ENCODE measurements at regions of chr1 and their contacts with region 1.

Region 1: GRCh38 chr1:21782868-21783678 is at the start of gene USP48:
- DNase-seq: peak; percentile 92
- ATAC-seq: peak; percentile 85
- H3K4me3 ChIP-seq: peak within 1 kb of the TSS; percentile 72 to 97 (median 80)
- H3K27ac ChIP-seq: peak within 1 kb of the TSS; percentile 99
- H3K4me1 ChIP-seq: peaks cover 41% of the 10 kb centered on the region
- H3K27me3 ChIP-seq: no peaks in the 10 kb centered on the region; a peak in 1 of 5 replicates
- CTCF ChIP-seq: peak; percentile 22; the same call in 1 of the 2 replicates
- EP300 ChIP-seq: no peak
- POLR2A ChIP-seq: peak; percentile 98 to 99
- RAD21 ChIP-seq: peak; percentile 7; the same call in 1 of the 2 replicates
- total RNA-seq, gene USP48: 29.9 and 30.4 TPM in 2 replicates

Region 2: DNA sequence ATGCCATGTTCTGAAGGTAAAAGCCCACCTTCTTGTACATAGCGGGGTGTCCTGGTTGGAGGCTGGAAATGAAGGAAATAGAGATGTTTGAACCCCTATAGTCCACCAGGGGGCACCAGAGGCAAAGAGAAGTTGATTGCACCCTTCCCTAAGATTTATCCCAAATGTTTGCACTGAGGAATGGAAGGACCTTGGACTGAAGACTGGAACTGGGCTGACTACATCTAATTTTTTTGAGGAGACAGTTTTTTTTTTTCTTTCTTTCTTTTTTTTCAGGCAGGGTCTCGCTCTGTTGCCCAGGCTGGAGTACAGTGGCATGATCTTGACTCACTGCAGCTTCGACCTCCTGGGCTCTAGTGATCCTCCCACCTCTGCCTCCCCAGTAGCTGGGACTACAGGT is 551.0 kb before region 1 on chr1:
- CTCF ChIA-PET with region 1: no interaction called
- POLR2A ChIA-PET with region 1: no interaction called
- in situ Hi-C with region 1: no loop called
- intact Hi-C with region 1: loop called (anchors 5 kb)
- DNase-seq: peak; percentile 56
- ATAC-seq: peak; percentile 79
- H3K4me3 ChIP-seq: no peak overlapping the region
- H3K27ac ChIP-seq: no peak overlapping the region
- H3K4me1 ChIP-seq: peaks cover 6% of the 10 kb centered on the region; the same call in 1 of the 2 replicates
- H3K27me3 ChIP-seq: no peaks in the 10 kb centered on the region
- CTCF ChIP-seq: peak; percentile 87
- EP300 ChIP-seq: no peak
- POLR2A ChIP-seq: no peak
- RAD21 ChIP-seq: peak; percentile 84

Region 3: DNA sequence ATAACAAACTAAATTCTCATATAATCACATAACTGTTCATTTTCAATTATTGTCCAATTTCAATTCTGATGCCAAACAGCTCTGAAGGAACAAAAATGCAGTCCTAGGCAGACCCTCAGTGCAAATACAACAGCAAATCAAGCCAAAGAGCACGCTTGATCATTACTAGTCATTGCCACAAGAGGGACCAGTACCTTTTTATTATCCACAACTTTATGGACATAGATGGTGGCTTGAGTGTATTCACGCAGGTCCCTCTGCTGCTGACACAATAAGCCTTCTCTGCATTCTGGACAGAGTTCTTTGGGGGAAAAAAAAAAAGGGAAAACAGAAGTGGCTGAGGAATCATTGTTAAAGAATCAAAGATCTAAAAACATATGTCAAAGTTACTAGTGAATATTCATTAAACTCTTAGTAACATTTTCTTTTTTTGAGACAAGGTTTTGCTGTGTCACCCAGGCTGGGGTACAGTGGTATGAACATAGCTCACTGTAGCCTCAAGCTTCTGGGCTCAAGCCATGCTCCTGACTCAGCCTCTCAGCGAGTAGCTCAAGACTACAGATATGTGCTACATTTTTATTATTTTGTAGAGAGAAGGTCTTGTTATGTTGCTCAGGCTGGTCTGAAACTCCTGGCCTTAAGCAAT is 79.6 kb before region 1 on chr1:
- CTCF ChIA-PET with region 1: no interaction called
- POLR2A ChIA-PET with region 1: interaction called, 3 read pairs
- in situ Hi-C with region 1: no loop called
- intact Hi-C with region 1: loop called (anchors 1 kb)
- DNase-seq: peak; percentile 39
- ATAC-seq: peak; percentile 71; the same call in 2 of the 3 replicates
- H3K4me3 ChIP-seq: no peak overlapping the region
- H3K27ac ChIP-seq: peak overlapping the region; percentile 17
- H3K4me1 ChIP-seq: peaks cover 41% of the 10 kb centered on the region
- H3K27me3 ChIP-seq: no peaks in the 10 kb centered on the region
- CTCF ChIP-seq: peak; percentile 49
- EP300 ChIP-seq: no peak
- POLR2A ChIP-seq: no peak
- RAD21 ChIP-seq: no peak

Region 4: GRCh38 chr1:21963477-21964217 is 180.6 kb after region 1 on chr1:
- CTCF ChIA-PET with region 1: no interaction called
- POLR2A ChIA-PET with region 1: no interaction called
- in situ Hi-C with region 1: no loop called
- intact Hi-C with region 1: loop called (anchors 1 kb)
- DNase-seq: peak; percentile 65
- ATAC-seq: peak; percentile 88
- H3K4me3 ChIP-seq: no peak overlapping the region
- H3K27ac ChIP-seq: no peak overlapping the region
- H3K4me1 ChIP-seq: peaks cover 39% of the 10 kb centered on the region
- H3K27me3 ChIP-seq: no peaks in the 10 kb centered on the region
- CTCF ChIP-seq: peak; percentile 96
- EP300 ChIP-seq: 0 out of 4 replicates have a peak, but pooled peaks of 1 of the 2 experiments have one; percentile 7
- POLR2A ChIP-seq: no peak
- RAD21 ChIP-seq: peak; percentile 94

Measured in HepG2 (cell line).